Activated B cell treated with CpG ODN at 0.5 μM for 24 hours (primary cell): ENCODE measurements at regions of chr10 and their contacts with region 1.

Region 1: DNA sequence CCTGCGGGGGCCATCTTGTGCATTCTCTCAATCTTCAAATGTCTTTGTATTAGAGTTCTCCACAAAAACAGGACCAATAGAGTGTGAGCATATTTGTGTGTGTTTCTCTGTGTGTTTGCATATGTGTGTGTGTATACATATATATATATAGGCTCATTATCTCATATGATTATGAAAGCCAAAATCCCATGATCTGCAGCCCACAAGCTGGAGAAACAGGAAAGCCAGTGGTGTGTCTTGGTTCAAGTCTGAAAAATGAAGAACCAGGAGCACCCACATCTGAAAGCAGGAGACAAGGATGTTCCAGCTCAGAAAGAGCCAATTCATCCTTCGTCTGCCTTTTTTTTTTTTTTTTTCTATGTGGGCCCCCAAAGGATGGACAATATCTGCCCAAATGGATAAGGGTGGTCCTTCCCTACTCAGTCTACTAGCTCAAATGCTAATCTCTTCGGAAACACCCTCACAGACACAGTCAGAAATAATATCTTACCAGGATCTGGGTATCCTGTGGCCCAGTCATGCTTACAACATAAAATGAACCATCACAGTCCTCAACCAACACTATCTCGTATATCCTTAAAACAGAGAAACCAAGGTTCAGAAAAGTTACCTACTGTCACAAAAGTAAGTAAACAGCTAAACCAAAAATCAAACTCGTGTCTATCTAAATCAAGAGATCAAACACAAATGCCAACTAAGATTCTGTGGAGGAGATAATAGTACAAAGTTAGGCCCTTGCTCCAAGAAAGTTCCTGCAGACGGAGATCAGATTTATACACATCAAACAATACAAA is 141.9 kb downstream of the JMJD1C start:
- DNase-seq: no peak
- ATAC-seq: no peak
- H3K4me3 Mint-ChIP-seq: no peak overlapping the region
- H3K27ac Mint-ChIP-seq: no peak overlapping the region
- H3K4me1 Mint-ChIP-seq: no peaks in the 10 kb centered on the region
- H3K27me3 Mint-ChIP-seq: no peaks in the 10 kb centered on the region
- CTCF ChIP-seq: no peak

Region 2: DNA sequence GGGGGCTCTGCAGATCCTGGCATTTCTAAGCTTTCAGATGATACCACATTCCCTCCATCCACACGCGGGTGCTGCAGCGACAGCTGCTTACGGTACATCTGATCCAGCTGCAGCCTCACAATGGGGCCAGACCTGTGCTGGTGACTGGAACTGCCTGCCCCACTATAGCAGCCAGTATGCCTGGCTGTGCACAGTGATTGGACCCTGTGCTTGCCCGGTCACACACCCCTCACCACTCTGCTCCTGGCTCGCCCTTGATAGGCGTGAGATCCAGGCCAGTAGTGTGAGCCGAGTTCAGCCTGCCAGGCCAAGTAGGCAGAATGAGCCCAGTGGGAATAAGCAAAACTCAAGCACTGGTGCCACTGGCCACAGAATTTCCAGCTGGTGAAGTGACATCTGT is 26.0 kb before region 1 on chr10:
- CTCF ChIA-PET with region 1: no interaction called
- POLR2A ChIA-PET with region 1: no interaction called
- intact Hi-C with region 1: no loop called
- DNase-seq: no peak
- ATAC-seq: no peak
- H3K4me3 Mint-ChIP-seq: no peak overlapping the region
- H3K27ac Mint-ChIP-seq: no peak overlapping the region
- H3K4me1 Mint-ChIP-seq: peaks cover 8% of the 10 kb centered on the region
- H3K27me3 Mint-ChIP-seq: no peaks in the 10 kb centered on the region
- CTCF ChIP-seq: no peak

Region 3: GRCh38 chr10:63313066-63313717 is 10.7 kb before region 1 on chr10:
- CTCF ChIA-PET with region 1: no interaction called
- POLR2A ChIA-PET with region 1: no interaction called
- intact Hi-C with region 1: no loop called
- DNase-seq: no peak
- ATAC-seq: no peak
- H3K4me3 Mint-ChIP-seq: no peak overlapping the region
- H3K27ac Mint-ChIP-seq: no peak overlapping the region
- H3K4me1 Mint-ChIP-seq: no peaks in the 10 kb centered on the region
- H3K27me3 Mint-ChIP-seq: no peaks in the 10 kb centered on the region
- CTCF ChIP-seq: no peak

Region 4: DNA sequence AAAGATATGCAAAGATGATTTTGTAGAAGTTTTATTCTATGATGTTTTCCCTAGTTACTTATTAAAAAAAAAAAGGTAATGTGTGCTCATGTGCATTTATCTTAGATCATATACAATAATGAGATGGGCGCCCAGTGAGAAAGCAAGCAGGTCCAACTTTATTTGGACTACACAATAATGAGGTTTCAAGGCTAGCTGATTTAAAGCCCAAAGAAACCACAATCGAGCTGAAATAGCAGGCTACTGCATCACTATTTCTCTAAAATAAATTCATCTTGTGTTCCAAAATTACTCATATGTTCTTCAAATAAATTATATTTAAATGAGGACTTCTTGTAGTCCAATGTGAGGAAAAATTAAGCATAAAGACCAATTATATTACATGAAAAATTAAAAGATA is 31.8 kb after region 1 on chr10:
- CTCF ChIA-PET with region 1: no interaction called
- POLR2A ChIA-PET with region 1: no interaction called
- intact Hi-C with region 1: no loop called
- DNase-seq: no peak
- ATAC-seq: no peak
- H3K4me3 Mint-ChIP-seq: no peak overlapping the region
- H3K27ac Mint-ChIP-seq: peak overlapping the region; percentile 32
- H3K4me1 Mint-ChIP-seq: peaks cover 22% of the 10 kb centered on the region
- H3K27me3 Mint-ChIP-seq: no peaks in the 10 kb centered on the region
- CTCF ChIP-seq: no peak

Region 5: DNA sequence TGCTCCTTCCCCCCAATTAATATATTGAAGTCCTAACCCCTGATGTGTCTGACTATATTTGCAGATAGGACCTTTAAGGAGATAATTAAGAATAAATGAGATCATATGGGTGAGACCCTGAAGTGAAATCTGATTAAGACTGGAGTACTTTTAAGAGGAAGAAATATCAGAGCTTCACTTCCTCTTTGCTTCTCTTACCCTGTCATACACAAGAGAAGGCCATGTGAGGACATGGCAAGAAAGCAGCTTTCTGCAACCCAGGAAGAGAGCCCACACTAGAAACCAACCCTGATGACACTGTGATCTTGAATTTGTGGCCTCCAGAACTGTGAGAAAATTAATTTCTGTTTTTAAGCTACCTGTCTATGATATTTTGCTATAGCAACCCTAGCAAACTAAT is 97.7 kb after region 1 on chr10:
- CTCF ChIA-PET with region 1: no interaction called
- POLR2A ChIA-PET with region 1: interaction called, 10 read pairs
- intact Hi-C with region 1: no loop called
- DNase-seq: no peak
- ATAC-seq: peak; percentile 98
- H3K4me3 Mint-ChIP-seq: peak overlapping the region; percentile 30
- H3K27ac Mint-ChIP-seq: peak overlapping the region; percentile 87
- H3K4me1 Mint-ChIP-seq: peaks cover 29% of the 10 kb centered on the region
- H3K27me3 Mint-ChIP-seq: no peaks in the 10 kb centered on the region
- CTCF ChIP-seq: no peak